Right cardiac atrium (tissue), 5 donors: ENCODE measurements at regions of chr2 and their contacts with region 1.

Region 1: GRCh38 chr2:25991965-25992364 is 9.7 kb upstream of the KIF3C start:
- DNase-seq: no peak
- ATAC-seq: peak in 1 of 2 donors; percentile 36
- H3K4me3 ChIP-seq: no peak overlapping the region
- H3K27ac ChIP-seq: no peak overlapping the region
- H3K4me1 ChIP-seq: no peaks in the 10 kb centered on the region
- H3K27me3 ChIP-seq: no peaks in the 10 kb centered on the region

Region 2: DNA sequence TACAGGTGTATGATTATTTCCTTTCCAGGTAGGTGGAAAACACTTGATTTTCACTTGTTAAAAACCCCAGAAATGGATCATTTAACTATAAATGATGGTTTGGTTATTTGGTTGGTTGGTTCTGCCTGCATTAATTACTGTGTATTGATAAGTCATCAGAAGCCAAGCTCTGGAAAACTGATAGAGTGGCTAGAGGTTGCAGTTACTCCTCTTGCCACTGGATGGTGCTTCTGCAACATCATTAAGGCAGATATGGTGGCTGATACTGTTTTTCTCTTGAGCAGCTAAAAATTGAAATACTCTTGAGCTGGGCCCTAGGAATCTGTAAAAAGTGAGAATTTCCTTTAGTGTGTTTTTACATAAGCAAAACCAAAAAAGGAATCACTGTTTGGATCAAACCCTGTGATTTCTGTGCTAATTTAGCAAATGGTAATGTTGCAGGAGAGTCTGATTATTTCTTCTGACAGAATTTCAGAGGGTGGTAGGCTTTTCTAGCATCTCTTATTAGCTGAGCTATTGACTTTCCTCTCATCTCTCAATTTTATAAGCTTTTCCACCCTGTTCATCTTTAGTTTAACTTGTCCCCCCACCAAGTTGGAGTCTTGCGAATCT is 96.2 kb after region 1 on chr2:
- intact Hi-C with region 1: loop called in 1 of 4 experiments (anchors 10 kb)
- DNase-seq: no peak
- ATAC-seq: peak; percentile 25 to 64
- H3K4me3 ChIP-seq: no peak overlapping the region
- H3K27ac ChIP-seq: no peak overlapping the region
- H3K4me1 ChIP-seq: no peaks in the 10 kb centered on the region
- H3K27me3 ChIP-seq: no peaks in the 10 kb centered on the region